GM12878 (cell line): ENCODE measurements at regions of chr1 and their contacts with region 1.

Region 1: DNA sequence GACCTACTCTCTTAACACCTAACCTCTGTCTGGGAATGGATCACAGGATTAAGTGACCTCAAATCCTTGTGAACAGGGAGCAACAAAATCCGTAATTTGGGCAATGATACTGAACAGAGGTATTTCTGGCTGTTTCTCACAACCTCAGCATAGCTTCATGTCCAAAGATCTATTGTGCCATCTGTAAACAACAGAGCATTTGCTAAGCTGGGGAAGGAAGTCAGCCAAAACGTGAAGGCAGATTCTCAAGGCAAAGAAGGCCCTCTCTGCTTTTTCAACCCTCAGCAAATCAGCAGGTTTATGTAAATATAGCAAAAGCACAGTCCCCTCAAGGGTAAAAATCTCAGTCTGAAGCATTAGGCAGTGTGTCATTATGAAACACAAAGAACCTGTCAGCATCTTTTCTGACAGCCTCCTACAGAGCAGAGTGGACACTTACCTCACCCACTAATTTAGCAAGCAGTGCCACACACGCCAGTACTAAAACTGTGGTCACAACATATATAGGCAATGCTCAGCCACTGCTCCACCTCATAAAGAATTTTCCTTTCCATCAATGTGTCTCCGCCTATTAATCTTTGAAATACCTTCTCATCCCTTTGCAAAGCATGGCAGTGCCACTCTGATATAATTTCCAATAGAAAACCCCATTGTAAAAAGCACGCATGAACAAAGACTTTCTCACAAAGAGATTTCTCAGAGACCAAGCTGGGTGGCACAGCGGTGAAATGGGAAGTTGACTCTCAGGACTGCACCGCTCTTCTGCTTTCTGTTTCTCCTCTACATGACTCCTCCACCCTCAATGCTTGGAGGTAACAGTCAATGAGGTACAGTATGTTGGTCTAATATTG is 188.0 kb downstream of the RERE start:
- DNase-seq: peak; percentile 91
- ATAC-seq: peak; percentile 95
- H3K4me3 ChIP-seq: peak overlapping the region; percentile 43; the same call in 1 of the 2 replicates
- H3K27ac ChIP-seq: peak overlapping the region; percentile 86
- H3K4me1 ChIP-seq: peaks cover 42% of the 10 kb centered on the region
- H3K27me3 ChIP-seq: no peaks in the 10 kb centered on the region
- CTCF ChIP-seq: no peak
- EP300 ChIP-seq: peak; percentile 24 to 52; a peak in 2 of 4 replicates
- POLR2A ChIP-seq: 0 out of 2 replicates have a peak, but pooled peaks have one; percentile 15
- RAD21 ChIP-seq: no peak

Region 2: GRCh38 chr1:7893529-7894180 is 735.8 kb before region 1 on chr1:
- CTCF ChIA-PET with region 1: no interaction called
- POLR2A ChIA-PET with region 1: no interaction called
- RAD21 ChIA-PET with region 1: no interaction called
- SMC1A ChIA-PET with region 1: no interaction called
- in situ Hi-C with region 1: no loop called
- intact Hi-C with region 1: no loop called
- DNase-seq: no peak
- ATAC-seq: no peak
- H3K4me3 ChIP-seq: no peak overlapping the region
- H3K27ac ChIP-seq: no peak overlapping the region
- H3K4me1 ChIP-seq: no peaks in the 10 kb centered on the region
- H3K27me3 ChIP-seq: no peaks in the 10 kb centered on the region; a peak in 1 of 4 replicates
- CTCF ChIP-seq: no peak
- EP300 ChIP-seq: no peak
- POLR2A ChIP-seq: no peak
- RAD21 ChIP-seq: no peak

Region 3: GRCh38 chr1:8421721-8422120 is 207.7 kb before region 1 on chr1:
- CTCF ChIA-PET with region 1: no interaction called
- POLR2A ChIA-PET with region 1: no interaction called
- RAD21 ChIA-PET with region 1: no interaction called
- SMC1A ChIA-PET with region 1: no interaction called
- in situ Hi-C with region 1: no loop called
- intact Hi-C with region 1: no loop called
- DNase-seq: no peak
- ATAC-seq: no peak
- H3K4me3 ChIP-seq: peak overlapping the region; percentile 79
- H3K27ac ChIP-seq: no peak overlapping the region
- H3K4me1 ChIP-seq: peaks cover 20% of the 10 kb centered on the region
- H3K27me3 ChIP-seq: no peaks in the 10 kb centered on the region
- CTCF ChIP-seq: no peak
- EP300 ChIP-seq: no peak
- POLR2A ChIP-seq: no peak
- RAD21 ChIP-seq: no peak

Region 4: GRCh38 chr1:8604041-8604945 is 25.2 kb before region 1 on chr1:
- CTCF ChIA-PET with region 1: interaction called, 3 read pairs
- POLR2A ChIA-PET with region 1: interaction called, 3 read pairs
- RAD21 ChIA-PET with region 1: interaction called, 7 read pairs
- SMC1A ChIA-PET with region 1: interaction called, 13 read pairs
- in situ Hi-C with region 1: no loop called
- intact Hi-C with region 1: no loop called
- DNase-seq: peak; percentile 82
- ATAC-seq: peak; percentile 95
- H3K4me3 ChIP-seq: peak overlapping the region; percentile 46; the same call in 1 of the 2 replicates
- H3K27ac ChIP-seq: peak overlapping the region; percentile 29; the same call in 1 of the 2 replicates
- H3K4me1 ChIP-seq: peaks cover 19% of the 10 kb centered on the region
- H3K27me3 ChIP-seq: no peaks in the 10 kb centered on the region
- CTCF ChIP-seq: no peak
- EP300 ChIP-seq: peak in 1 of 2 experiments; percentile 58; a peak in 1 of 4 replicates
- POLR2A ChIP-seq: no peak
- RAD21 ChIP-seq: 0 out of 2 replicates have a peak, but pooled peaks have one; percentile 12

Region 5: DNA sequence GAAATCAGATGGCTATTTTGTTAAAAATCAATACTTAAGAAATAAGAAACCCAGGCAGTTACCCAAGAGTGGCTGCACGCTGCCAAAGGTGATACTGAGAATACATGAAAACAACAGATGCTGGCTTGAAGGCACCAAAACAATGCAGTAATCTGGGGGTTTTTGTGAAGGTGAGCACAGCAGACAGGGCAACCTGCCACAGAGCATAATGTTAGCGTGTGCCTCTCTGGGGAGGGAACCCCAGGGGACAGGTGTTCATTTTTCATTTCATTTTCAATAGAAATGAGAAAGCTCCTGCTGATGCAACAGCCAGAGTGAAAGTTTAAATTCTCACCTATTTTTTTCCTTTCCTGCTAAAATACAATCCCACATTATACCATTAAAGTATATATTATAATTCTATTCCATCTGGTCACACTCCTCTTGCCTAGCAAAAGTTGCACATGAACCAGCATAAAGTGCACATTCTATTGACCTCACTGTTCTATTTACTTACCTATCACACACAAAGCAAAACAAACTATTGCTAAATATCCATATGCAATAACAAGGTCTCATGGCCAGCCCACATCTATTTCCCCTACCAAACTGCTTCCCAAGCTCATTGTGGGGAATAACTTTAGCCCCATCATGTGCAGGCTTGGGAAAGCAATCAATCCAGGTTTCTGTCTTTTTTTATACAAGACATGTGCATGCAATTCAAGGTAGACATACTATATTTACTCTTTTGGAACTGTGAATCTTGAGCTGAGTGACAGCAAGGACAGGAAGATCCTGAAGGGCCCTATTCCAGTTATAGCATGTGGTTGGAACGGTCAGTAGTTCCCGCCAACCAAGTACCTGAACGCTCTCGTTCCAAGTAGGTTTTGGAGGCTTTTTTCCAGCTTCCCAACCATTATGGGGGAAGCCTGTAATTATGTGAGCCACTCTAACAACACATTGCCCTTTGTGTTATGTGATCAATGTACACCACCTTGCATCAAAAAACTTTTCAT is 14.4 kb after region 1 on chr1:
- CTCF ChIA-PET with region 1: interaction called, 8 read pairs
- POLR2A ChIA-PET with region 1: interaction called, 31 read pairs
- RAD21 ChIA-PET with region 1: interaction called, 59 read pairs
- SMC1A ChIA-PET with region 1: interaction called, 60 read pairs
- in situ Hi-C with region 1: no loop called
- intact Hi-C with region 1: no loop called
- DNase-seq: peak; percentile 94
- ATAC-seq: peak; percentile 95
- H3K4me3 ChIP-seq: no peak overlapping the region
- H3K27ac ChIP-seq: peak overlapping the region; percentile 75
- H3K4me1 ChIP-seq: peaks cover 43% of the 10 kb centered on the region
- H3K27me3 ChIP-seq: no peaks in the 10 kb centered on the region
- CTCF ChIP-seq: no peak
- EP300 ChIP-seq: peak; percentile 52 to 61; a peak in 1 of 4 replicates
- POLR2A ChIP-seq: no peak
- RAD21 ChIP-seq: 0 out of 2 replicates have a peak, but pooled peaks have one; percentile 27

Region 6: GRCh38 chr1:8649027-8649426 is 19.6 kb after region 1 on chr1:
- CTCF ChIA-PET with region 1: interaction called, 8 read pairs
- POLR2A ChIA-PET with region 1: interaction called, 31 read pairs
- RAD21 ChIA-PET with region 1: interaction called, 59 read pairs
- SMC1A ChIA-PET with region 1: interaction called, 60 read pairs
- in situ Hi-C with region 1: no loop called
- intact Hi-C with region 1: no loop called
- DNase-seq: no peak
- ATAC-seq: peak; percentile 76
- H3K4me3 ChIP-seq: no peak overlapping the region
- H3K27ac ChIP-seq: 0 out of 2 replicates have a peak overlapping the region, but pooled peaks have one; percentile 39
- H3K4me1 ChIP-seq: peaks cover 67% of the 10 kb centered on the region
- H3K27me3 ChIP-seq: no peaks in the 10 kb centered on the region
- CTCF ChIP-seq: no peak
- EP300 ChIP-seq: peak in 1 of 2 experiments; percentile 84; a peak in 3 of 4 replicates
- POLR2A ChIP-seq: no peak
- RAD21 ChIP-seq: no peak